Activated T-helper 2 cell treated with anti-CD3 and anti-CD28 coated beads, Interferon-gamma antibody, Interleukin-2, Interleukin-4, amounts not matched to agents 10 μg/mL and 5 μg/mL and 100 μg/mL, durations not matched to agents 14 hours and 24 hours and 36 hours (primary cell): ENCODE measurements at regions of chr4 and their contacts with region 1.

Region 1: GRCh38 chr4:184825896-184826690 is at the start of gene ACSL1:
- DNase-seq: peak; percentile 72
- H3K4me3 Mint-ChIP-seq: peak within 1 kb of the TSS; percentile 94
- H3K27ac Mint-ChIP-seq: peak within 1 kb of the TSS; percentile 90
- H3K4me1 Mint-ChIP-seq: peaks cover 39% of the 10 kb centered on the region
- H3K27me3 Mint-ChIP-seq: peaks cover 19% of the 10 kb centered on the region
- total RNA-seq, gene ACSL1: 42.7 and 43.0 TPM in 2 replicates

Region 2: GRCh38 chr4:184263910-184264732 is 562.0 kb before region 1 on chr4:
- intact Hi-C with region 1: loop called (anchors 5 kb)
- DNase-seq: peak; percentile 85
- H3K4me3 Mint-ChIP-seq: no peak overlapping the region
- H3K27ac Mint-ChIP-seq: peak overlapping the region; percentile 54
- H3K4me1 Mint-ChIP-seq: peaks cover 54% of the 10 kb centered on the region
- H3K27me3 Mint-ChIP-seq: no peaks in the 10 kb centered on the region

Region 3: DNA sequence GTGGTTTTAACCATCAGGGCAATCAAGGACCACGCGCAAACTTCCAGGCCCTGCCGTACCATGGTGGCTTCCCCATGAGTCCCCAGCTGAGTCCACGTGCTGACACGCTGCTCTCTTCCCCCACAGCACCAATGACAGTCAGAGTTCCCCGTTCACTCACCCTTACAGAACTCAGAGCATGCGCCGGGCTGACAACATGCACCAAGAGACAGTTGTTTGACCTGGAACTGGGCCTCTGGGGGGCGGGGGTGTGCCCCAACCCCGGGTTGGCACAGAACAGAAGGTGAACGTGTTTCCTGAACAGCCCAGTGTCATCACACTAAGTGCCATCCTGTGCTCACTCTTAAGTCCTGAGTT is 381.2 kb before region 1 on chr4:
- intact Hi-C with region 1: no loop called
- DNase-seq: no peak
- H3K4me3 Mint-ChIP-seq: no peak overlapping the region
- H3K27ac Mint-ChIP-seq: no peak overlapping the region
- H3K4me1 Mint-ChIP-seq: peaks cover 67% of the 10 kb centered on the region
- H3K27me3 Mint-ChIP-seq: no peaks in the 10 kb centered on the region

Region 4: GRCh38 chr4:184575306-184575705 is 250.8 kb before region 1 on chr4:
- intact Hi-C with region 1: loop called (anchors 10 kb)
- DNase-seq: no peak
- H3K4me3 Mint-ChIP-seq: no peak overlapping the region
- H3K27ac Mint-ChIP-seq: peak overlapping the region; percentile 75
- H3K4me1 Mint-ChIP-seq: peaks cover 18% of the 10 kb centered on the region
- H3K27me3 Mint-ChIP-seq: no peaks in the 10 kb centered on the region

Region 5: DNA sequence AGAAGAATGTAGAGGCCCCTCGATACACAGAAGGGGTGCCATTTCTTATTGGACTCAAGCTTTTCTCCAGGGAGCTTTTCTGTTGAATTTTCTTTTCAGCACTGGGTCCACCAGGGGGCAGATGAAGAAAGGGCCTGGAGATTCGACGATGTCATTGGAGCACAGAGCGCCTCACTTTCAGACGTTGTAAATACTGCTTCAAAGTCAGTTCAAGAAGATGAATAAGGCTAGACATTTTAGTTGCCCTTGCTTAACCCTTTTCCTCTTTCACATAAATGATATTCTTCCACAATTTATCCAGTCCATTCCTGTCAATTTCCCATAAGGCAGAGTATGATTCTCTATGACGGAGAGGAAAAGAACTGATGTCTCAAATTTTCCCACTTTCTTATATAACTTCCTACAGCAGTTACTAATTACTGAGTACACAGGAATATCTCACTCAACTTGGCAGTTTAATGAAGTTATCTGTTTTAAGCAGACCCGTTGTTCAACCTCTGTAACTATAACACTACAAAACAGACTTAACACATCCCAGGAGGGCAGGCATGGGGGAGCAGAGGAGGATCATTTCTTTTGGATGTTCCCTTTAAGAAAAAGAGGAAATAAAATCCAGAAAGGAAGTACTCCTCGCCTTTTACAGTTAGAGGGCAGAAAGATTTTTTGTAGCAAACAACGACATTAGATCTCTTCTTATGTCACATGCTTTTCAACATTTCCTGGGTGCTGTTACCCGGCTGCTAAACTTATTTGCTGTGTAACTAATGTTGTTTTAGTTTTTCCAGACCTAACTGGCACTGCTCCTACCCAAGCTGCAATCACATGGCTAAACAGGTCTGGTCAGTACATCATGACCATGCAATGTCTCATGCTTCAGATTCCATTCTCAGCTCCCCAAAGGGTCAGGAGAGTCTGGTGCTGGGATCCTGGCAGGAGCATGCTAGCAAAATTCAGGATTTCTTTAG is 80.0 kb before region 1 on chr4:
- intact Hi-C with region 1: loop called (anchors 2 kb)
- DNase-seq: peak; percentile 56
- H3K4me3 Mint-ChIP-seq: no peak overlapping the region
- H3K27ac Mint-ChIP-seq: no peak overlapping the region
- H3K4me1 Mint-ChIP-seq: peaks cover 11% of the 10 kb centered on the region
- H3K27me3 Mint-ChIP-seq: no peaks in the 10 kb centered on the region

Region 6: GRCh38 chr4:184845367-184846021 is 19.4 kb after region 1 on chr4:
- intact Hi-C with region 1: loop called (anchors 2 kb)
- DNase-seq: no peak
- H3K4me3 Mint-ChIP-seq: no peak overlapping the region
- H3K27ac Mint-ChIP-seq: no peak overlapping the region
- H3K4me1 Mint-ChIP-seq: peaks cover 32% of the 10 kb centered on the region
- H3K27me3 Mint-ChIP-seq: peaks cover 6% of the 10 kb centered on the region

Region 7: DNA sequence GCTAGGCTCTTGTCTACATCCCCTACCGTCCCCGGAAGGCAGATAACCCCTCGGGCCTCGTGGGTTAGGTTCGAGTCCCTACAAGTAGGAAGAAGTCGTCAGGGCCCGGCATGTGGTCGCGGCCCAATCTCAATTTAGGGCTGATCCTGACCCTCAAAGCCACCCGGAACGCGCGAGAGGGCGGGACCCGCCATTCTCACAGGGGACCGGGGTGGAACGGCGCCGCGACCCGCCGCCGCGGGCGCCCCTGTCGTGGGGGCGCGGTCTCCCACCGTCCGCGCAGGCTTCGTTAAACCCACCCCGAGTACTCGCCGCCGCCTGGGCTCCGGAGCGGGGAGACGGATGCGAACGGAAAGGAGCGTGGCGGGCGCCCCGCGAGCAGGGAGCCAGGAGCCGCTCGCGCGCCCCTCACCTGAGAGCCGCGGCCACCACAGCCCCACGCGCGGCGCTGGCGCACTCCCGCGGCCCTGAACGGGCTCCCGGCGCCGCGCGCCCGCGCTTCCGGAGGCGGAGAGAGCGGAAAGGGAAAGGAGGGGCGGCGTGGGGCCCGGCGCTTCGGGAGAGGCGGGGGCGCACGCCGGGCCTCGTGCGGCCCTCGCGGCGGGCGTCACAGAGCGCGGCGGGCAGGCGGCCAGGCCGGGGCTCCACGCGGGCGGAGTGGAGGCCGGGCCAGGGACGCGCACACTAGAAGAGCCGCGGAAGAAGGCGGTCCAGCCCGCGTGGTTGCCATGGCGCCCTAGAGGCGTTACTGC is 377.6 kb after region 1 on chr4 and contains the start of gene CFAP97:
- intact Hi-C with region 1: loop called (anchors 10 kb)
- DNase-seq: peak; percentile 71
- H3K4me3 Mint-ChIP-seq: peak within 1 kb of the TSS; percentile 98
- H3K27ac Mint-ChIP-seq: peak within 1 kb of the TSS; percentile 99
- H3K4me1 Mint-ChIP-seq: peaks cover 30% of the 10 kb centered on the region
- H3K27me3 Mint-ChIP-seq: peaks cover 5% of the 10 kb centered on the region
- total RNA-seq, gene CFAP97: 44.1 and 46.9 TPM in 2 replicates